ENCODE measurements at regions of chr4 and their contacts with region 1.

Region 1: DNA sequence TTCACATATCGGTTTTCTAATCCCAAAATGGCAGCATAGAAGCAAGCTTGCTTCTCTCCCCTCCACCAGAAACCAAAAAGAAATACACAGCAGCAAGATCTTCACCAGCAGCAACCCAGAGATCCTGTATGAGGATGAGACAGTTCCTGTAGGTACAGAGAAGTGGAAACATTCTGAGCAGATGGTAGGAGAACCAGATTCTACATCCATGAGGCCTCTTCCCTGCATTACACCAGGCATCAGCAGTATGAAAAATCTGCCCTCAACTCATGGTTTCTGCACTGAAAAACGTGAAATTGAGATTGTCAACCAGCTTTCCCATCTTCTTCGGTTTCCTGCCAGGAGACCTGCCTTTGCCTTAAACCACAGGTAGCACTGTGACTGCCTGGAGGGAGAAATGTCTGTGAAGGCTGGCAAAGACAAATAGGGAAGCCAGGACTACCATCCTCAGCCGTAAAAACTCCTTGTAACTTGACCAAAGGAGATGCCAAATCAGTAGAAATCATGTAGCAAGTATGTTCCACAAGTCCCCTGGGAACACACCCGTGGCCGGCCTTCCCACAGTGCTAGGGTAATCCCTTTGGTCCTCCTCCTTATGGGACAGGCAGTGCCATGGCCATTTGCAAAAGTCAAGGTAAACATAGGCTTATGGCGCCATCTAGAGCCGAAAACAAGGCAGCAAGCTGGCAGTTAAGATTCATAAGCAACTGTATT is 24.0 kb upstream of the MTHFD2L start:
- DNase-seq: peak; percentile 65
- H3K4me3 ChIP-seq: no peak overlapping the region
- H3K27ac ChIP-seq: no peak overlapping the region
- H3K27me3 ChIP-seq: no peaks in the 10 kb centered on the region
- CTCF ChIP-seq: peak; percentile 92

Region 2: GRCh38 chr4:73593631-73594241 is 540.2 kb before region 1 on chr4:
- CTCF ChIA-PET with region 1: interaction called, 23 read pairs
- POLR2A ChIA-PET with region 1: no interaction called
- DNase-seq: no peak
- H3K4me3 ChIP-seq: no peak overlapping the region
- H3K27ac ChIP-seq: no peak overlapping the region
- H3K27me3 ChIP-seq: no peaks in the 10 kb centered on the region
- CTCF ChIP-seq: peak; percentile 63

Region 3: GRCh38 chr4:73676861-73677323 is 457.1 kb before region 1 on chr4:
- CTCF ChIA-PET with region 1: interaction called, 13 read pairs
- POLR2A ChIA-PET with region 1: no interaction called
- DNase-seq: peak; percentile 85
- H3K4me3 ChIP-seq: no peak overlapping the region
- H3K27ac ChIP-seq: peak overlapping the region; percentile 33
- H3K27me3 ChIP-seq: no peaks in the 10 kb centered on the region
- CTCF ChIP-seq: no peak

Region 4: GRCh38 chr4:73929278-73929677 is 204.7 kb before region 1 on chr4:
- CTCF ChIA-PET with region 1: interaction called, 20 read pairs
- POLR2A ChIA-PET with region 1: no interaction called
- DNase-seq: no peak
- H3K4me3 ChIP-seq: no peak overlapping the region
- H3K27ac ChIP-seq: no peak overlapping the region
- H3K27me3 ChIP-seq: no peaks in the 10 kb centered on the region
- CTCF ChIP-seq: no peak

Region 5: DNA sequence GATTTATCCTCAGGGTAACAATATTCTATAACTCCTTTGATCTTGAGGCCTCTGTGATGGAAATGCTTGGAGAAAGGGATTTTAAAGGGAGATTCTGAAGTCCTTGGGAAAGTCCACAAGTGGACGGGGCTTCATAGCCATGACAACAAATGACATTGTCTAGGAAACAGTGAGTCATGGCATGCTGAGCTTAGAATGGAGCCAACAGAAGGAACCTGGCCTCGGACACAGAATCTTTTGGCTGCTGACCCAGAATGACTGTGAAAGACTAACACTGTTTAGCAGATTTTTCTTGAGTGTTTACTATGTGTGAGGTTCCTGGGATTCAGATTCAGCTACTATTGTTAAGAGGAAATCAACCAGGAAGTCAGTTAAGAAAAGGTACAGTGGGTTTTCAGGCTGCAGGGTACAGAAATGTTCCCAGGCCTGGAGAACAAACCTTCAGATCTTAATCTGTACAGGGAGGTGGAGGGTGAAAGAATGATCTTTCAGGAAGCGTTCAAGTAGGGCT is 16.9 kb before region 1 on chr4:
- CTCF ChIA-PET with region 1: interaction called, 12 read pairs
- POLR2A ChIA-PET with region 1: no interaction called
- DNase-seq: peak; percentile 52
- H3K4me3 ChIP-seq: no peak overlapping the region
- H3K27ac ChIP-seq: peak overlapping the region; percentile 40
- H3K27me3 ChIP-seq: no peaks in the 10 kb centered on the region
- CTCF ChIP-seq: no peak

Measured in AG04450 (cell line).